ENCODE measurements at regions of chr12 and their contacts with region 1.

Region 1: GRCh38 chr12:70154960-70155589 is 88.2 kb upstream of the CNOT2 start:
- DNase-seq: no peak
- H3K4me3 ChIP-seq: no peak overlapping the region
- H3K27ac ChIP-seq: no peak overlapping the region
- H3K4me1 ChIP-seq: no peaks in the 10 kb centered on the region
- H3K27me3 ChIP-seq: no peaks in the 10 kb centered on the region
- CTCF ChIP-seq: no peak
- EP300 ChIP-seq: no peak
- POLR2A ChIP-seq: no peak

Region 2: GRCh38 chr12:69879041-69879960 is 275.8 kb before region 1 on chr12:
- intact Hi-C with region 1: no loop called
- DNase-seq: peak; percentile 34 to 65 (median 62)
- H3K4me3 ChIP-seq: no peak overlapping the region
- H3K27ac ChIP-seq: no peak overlapping the region
- H3K4me1 ChIP-seq: no peaks in the 10 kb centered on the region
- H3K27me3 ChIP-seq: no peaks in the 10 kb centered on the region
- CTCF ChIP-seq: peak; percentile 47 to 55 (median 47)
- EP300 ChIP-seq: no peak
- POLR2A ChIP-seq: no peak

Region 3: GRCh38 chr12:69932676-69933552 is 222.2 kb before region 1 on chr12:
- intact Hi-C with region 1: no loop called
- DNase-seq: no peak
- H3K4me3 ChIP-seq: no peak overlapping the region
- H3K27ac ChIP-seq: no peak overlapping the region
- H3K4me1 ChIP-seq: no peaks in the 10 kb centered on the region
- H3K27me3 ChIP-seq: no peaks in the 10 kb centered on the region
- CTCF ChIP-seq: no peak
- EP300 ChIP-seq: no peak
- POLR2A ChIP-seq: no peak

Region 4: DNA sequence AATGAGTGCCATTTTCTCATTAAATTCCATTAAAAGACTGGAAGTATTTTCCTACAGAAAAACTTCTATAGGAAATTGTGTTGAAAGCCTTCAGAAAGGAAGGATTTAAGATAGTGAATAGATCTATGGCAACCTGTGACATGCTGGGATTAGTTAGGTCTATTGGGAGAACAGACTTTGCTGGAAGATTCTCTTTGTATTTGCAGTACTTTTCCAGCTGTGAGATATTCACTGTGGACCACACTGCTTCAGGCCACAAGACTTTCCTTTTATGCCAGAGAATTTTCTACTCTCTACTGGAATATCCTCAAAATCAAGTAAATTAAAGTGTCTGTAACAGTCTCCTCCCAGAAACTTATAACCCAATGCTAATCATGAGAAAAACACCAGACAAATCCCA is 193.8 kb before region 1 on chr12:
- intact Hi-C with region 1: loop called in 1 of 4 experiments (anchors 5 kb)
- DNase-seq: no peak
- H3K4me3 ChIP-seq: no peak overlapping the region
- H3K27ac ChIP-seq: no peak overlapping the region
- H3K4me1 ChIP-seq: no peaks in the 10 kb centered on the region
- H3K27me3 ChIP-seq: no peaks in the 10 kb centered on the region
- CTCF ChIP-seq: no peak
- EP300 ChIP-seq: no peak
- POLR2A ChIP-seq: no peak

Region 5: DNA sequence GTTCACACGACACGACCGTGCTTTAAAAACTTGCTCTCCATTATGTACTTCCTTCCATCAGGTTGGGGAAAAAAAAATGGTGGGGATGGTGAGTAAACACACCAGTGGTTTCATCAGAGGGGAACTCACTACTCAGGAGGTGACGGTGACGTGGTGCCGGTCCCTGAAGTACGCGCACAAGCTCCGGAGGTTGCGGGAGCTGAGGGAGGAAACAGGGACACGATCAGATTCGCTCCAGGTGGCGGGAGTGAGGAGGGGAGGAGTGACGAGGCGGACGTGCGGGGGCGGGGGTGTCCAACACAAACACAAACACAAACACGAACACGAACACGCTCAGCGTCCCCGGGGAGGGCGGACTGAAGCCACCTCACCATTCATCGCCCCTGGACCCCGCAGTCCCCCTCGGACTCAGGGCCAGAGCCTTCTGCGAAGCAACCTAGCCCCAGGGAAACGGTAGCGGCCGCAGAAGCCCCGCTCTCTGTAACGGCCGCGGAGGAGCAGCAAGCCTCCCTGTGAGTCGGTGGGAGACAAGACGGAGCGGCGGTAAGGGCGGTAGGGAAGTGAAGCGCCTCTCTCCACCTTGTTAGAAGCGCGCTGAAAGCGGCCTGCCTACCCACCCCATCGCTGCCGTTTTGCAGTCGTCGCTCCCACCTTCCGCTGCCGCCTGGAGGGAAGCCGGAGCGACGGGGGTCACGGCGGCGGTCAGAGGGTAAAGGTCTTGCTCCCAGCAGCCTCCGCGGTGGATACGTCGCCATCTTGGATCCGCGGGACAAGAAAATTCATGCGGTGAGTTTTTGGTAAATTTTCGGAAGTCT is 87.8 kb after region 1 on chr12 and contains the start of gene CNOT2:
- intact Hi-C with region 1: no loop called
- DNase-seq: peak; percentile 87 to 95 (median 90)
- H3K4me3 ChIP-seq: peak within 1 kb of the TSS; percentile 77
- H3K27ac ChIP-seq: peak within 1 kb of the TSS; percentile 92 to 94
- H3K4me1 ChIP-seq: peaks cover 3% of the 10 kb centered on the region
- H3K27me3 ChIP-seq: no peaks in the 10 kb centered on the region
- CTCF ChIP-seq: no peak
- EP300 ChIP-seq: no peak
- POLR2A ChIP-seq: peak; percentile 49
- total RNA-seq, gene CNOT2: 51.9 to 115 (median 70.1) TPM